ENCODE measurements at regions of chr3 and their contacts with region 1.

Region 1: GRCh38 chr3:193831495-193832455 is 238.8 kb downstream of the OPA1 start:
- DNase-seq: peak; percentile 79
- H3K4me3 Mint-ChIP-seq: peak overlapping the region; percentile 11
- H3K27ac Mint-ChIP-seq: peak overlapping the region; percentile 90
- H3K4me1 Mint-ChIP-seq: peaks cover 98% of the 10 kb centered on the region
- H3K27me3 Mint-ChIP-seq: no peaks in the 10 kb centered on the region
- CTCF ChIP-seq: no peak

Region 2: DNA sequence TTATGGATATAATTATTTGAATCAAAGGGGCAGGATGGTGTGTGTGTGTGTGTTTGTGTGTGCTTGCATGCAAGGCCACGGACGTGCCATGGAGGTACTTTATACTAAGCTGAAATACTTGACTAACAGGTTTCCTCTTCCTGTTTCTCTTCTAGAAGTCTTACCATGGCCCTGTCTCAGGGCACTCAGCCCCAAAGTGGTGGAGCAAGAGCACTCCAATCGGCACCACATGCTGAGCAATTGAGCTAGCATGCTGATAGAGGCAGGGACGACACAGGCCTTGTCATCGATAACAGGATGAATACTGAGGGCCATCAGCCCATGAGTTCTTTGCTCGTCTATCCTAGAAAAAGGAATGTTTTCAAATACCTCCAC is 40.1 kb before region 1 on chr3:
- CTCF ChIA-PET with region 1: no interaction called
- intact Hi-C with region 1: loop called (anchors 2 kb)
- DNase-seq: peak; percentile 71
- H3K4me3 Mint-ChIP-seq: no peak overlapping the region
- H3K27ac Mint-ChIP-seq: peak overlapping the region; percentile 63
- H3K4me1 Mint-ChIP-seq: peaks cover 77% of the 10 kb centered on the region
- H3K27me3 Mint-ChIP-seq: no peaks in the 10 kb centered on the region
- CTCF ChIP-seq: no peak

Region 3: GRCh38 chr3:193842029-193842798 is 10.4 kb after region 1 on chr3:
- CTCF ChIA-PET with region 1: interaction called, 11 read pairs
- intact Hi-C with region 1: loop called (anchors 2 kb)
- DNase-seq: no peak
- H3K4me3 Mint-ChIP-seq: peak overlapping the region; percentile 59
- H3K27ac Mint-ChIP-seq: peak overlapping the region; percentile 96
- H3K4me1 Mint-ChIP-seq: peaks cover 94% of the 10 kb centered on the region
- H3K27me3 Mint-ChIP-seq: no peaks in the 10 kb centered on the region
- CTCF ChIP-seq: no peak

Region 4: DNA sequence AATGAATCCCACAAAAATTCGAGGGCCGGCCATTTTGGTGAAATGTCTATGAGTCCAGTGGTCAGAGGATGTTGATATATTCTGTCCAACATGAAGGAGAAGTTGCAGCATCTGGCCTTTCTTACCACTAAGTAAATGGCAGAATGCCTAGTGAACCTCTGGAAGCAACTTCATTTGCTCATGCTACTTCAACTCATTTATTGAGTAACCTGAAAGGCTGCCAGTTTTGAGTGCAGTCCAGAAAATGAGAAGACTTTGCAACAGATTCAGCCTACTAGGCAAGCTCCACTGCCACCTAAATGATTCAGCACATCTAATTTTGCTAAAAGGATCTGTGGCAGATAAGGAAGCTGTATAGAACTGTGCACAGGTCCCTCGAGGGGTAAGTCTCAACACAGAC is 26.2 kb after region 1 on chr3:
- CTCF ChIA-PET with region 1: no interaction called
- intact Hi-C with region 1: no loop called
- DNase-seq: no peak
- H3K4me3 Mint-ChIP-seq: no peak overlapping the region
- H3K27ac Mint-ChIP-seq: no peak overlapping the region
- H3K4me1 Mint-ChIP-seq: peaks cover 48% of the 10 kb centered on the region
- H3K27me3 Mint-ChIP-seq: no peaks in the 10 kb centered on the region
- CTCF ChIP-seq: no peak

Region 5: GRCh38 chr3:193946945-193947344 is 115.2 kb after region 1 on chr3:
- CTCF ChIA-PET with region 1: no interaction called
- intact Hi-C with region 1: loop called (anchors 1 kb)
- DNase-seq: peak; percentile 72
- H3K4me3 Mint-ChIP-seq: no peak overlapping the region
- H3K27ac Mint-ChIP-seq: peak overlapping the region; percentile 52
- H3K4me1 Mint-ChIP-seq: peaks cover 42% of the 10 kb centered on the region
- H3K27me3 Mint-ChIP-seq: no peaks in the 10 kb centered on the region
- CTCF ChIP-seq: no peak

Region 6: DNA sequence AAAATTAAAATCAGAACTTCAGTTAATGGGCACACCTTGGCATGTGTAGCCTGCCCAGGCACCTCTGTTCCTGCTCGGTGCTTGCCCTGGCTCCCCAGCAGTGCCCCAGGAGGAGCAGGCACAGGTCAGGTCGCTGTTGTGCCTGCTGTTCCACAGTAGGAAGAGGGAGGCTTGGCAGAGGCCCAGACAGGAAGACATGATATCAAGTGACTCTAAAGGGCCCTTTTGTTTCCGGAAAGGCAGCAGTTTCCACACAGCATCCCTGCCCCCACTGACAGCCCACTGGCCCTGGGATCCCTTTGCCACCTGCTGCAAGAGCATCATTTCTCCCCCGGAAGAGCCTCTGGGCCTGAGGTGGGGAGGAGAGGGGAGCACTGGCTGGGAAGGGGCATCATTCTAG is 263.7 kb after region 1 on chr3:
- CTCF ChIA-PET with region 1: no interaction called
- intact Hi-C with region 1: no loop called
- DNase-seq: peak; percentile 77
- H3K4me3 Mint-ChIP-seq: no peak overlapping the region
- H3K27ac Mint-ChIP-seq: peak overlapping the region; percentile 57
- H3K4me1 Mint-ChIP-seq: peaks cover 73% of the 10 kb centered on the region
- H3K27me3 Mint-ChIP-seq: peaks cover 11% of the 10 kb centered on the region
- CTCF ChIP-seq: no peak

Measured in Calu3 (cell line).